Activated CD8-positive, alpha-beta T cell treated with anti-CD3 and anti-CD28 coated beads, Interleukin-2, amount 10 ng/mL, durations not matched to agents 7 days and 5 days (primary cell): ENCODE measurements at regions of chr1 and their contacts with region 1.

Region 1: DNA sequence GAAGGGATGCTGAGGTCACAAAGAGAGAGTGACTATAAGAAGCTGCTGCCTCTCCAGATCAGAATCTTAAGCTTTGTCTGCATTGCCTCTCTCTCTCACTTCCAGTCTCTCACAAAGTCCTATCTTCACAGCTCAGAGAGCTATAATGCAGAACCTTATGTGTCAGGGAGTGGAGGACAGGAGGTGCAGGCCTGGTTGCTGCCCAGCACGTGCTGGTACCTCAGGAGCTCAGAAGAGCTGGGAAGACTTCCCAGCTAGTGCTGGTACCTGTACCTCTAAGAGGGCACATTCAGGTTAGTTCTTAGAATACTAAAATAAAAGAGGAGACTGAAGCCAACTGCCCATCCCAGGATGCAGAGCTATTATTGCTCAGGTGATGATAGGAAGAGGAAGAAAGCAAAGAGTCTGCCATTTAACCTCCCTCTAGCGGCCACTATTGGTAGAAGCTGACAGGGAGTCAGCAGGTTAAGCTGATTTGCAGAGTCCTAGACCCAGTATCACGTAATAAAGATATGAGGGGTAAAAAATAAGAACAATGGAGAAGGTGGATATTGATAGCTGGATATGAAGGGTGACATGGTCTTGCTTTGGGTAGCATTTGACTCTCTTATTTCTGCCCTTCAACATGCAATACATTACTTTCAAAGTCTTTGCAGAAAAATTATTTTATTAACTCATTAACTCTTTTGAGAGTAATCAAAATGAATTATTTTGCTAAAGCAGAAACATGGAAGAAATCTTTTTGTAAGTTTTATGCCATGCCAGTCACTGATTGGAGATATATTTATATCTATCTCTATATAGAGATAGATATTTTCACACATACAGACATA is 138.1 kb upstream of the HMCN1 start:
- DNase-seq: peak; percentile 60
- ATAC-seq: peak; percentile 76
- H3K4me3 Mint-ChIP-seq: no peak overlapping the region
- H3K27ac Mint-ChIP-seq: no peak overlapping the region
- H3K4me1 Mint-ChIP-seq: peaks cover 27% of the 10 kb centered on the region
- H3K27me3 Mint-ChIP-seq: no peaks in the 10 kb centered on the region

Region 2: GRCh38 chr1:185404291-185404690 is 191.8 kb before region 1 on chr1:
- CTCF ChIA-PET with region 1: no interaction called
- POLR2A ChIA-PET with region 1: no interaction called
- DNase-seq: no peak
- ATAC-seq: no peak
- H3K4me3 Mint-ChIP-seq: peak overlapping the region; percentile 34
- H3K27ac Mint-ChIP-seq: peak overlapping the region; percentile 63
- H3K4me1 Mint-ChIP-seq: peaks cover 44% of the 10 kb centered on the region
- H3K27me3 Mint-ChIP-seq: no peaks in the 10 kb centered on the region

Region 3: GRCh38 chr1:185566995-185567394 is 29.1 kb before region 1 on chr1:
- CTCF ChIA-PET with region 1: interaction called, 33 read pairs
- POLR2A ChIA-PET with region 1: no interaction called
- DNase-seq: peak; percentile 79
- ATAC-seq: peak; percentile 84
- H3K4me3 Mint-ChIP-seq: peak overlapping the region; percentile 29
- H3K27ac Mint-ChIP-seq: peak overlapping the region; percentile 76
- H3K4me1 Mint-ChIP-seq: peaks cover 70% of the 10 kb centered on the region
- H3K27me3 Mint-ChIP-seq: no peaks in the 10 kb centered on the region

Region 4: GRCh38 chr1:185573677-185574076 is 22.4 kb before region 1 on chr1:
- CTCF ChIA-PET with region 1: interaction called, 15 read pairs
- POLR2A ChIA-PET with region 1: no interaction called
- DNase-seq: no peak
- ATAC-seq: no peak
- H3K4me3 Mint-ChIP-seq: no peak overlapping the region
- H3K27ac Mint-ChIP-seq: no peak overlapping the region
- H3K4me1 Mint-ChIP-seq: peaks cover 22% of the 10 kb centered on the region
- H3K27me3 Mint-ChIP-seq: no peaks in the 10 kb centered on the region

Region 5: GRCh38 chr1:185585770-185586169 is 10.3 kb before region 1 on chr1:
- CTCF ChIA-PET with region 1: interaction called, 20 read pairs
- POLR2A ChIA-PET with region 1: no interaction called
- DNase-seq: no peak
- ATAC-seq: no peak
- H3K4me3 Mint-ChIP-seq: no peak overlapping the region
- H3K27ac Mint-ChIP-seq: no peak overlapping the region
- H3K4me1 Mint-ChIP-seq: no peaks in the 10 kb centered on the region
- H3K27me3 Mint-ChIP-seq: no peaks in the 10 kb centered on the region

Region 6: DNA sequence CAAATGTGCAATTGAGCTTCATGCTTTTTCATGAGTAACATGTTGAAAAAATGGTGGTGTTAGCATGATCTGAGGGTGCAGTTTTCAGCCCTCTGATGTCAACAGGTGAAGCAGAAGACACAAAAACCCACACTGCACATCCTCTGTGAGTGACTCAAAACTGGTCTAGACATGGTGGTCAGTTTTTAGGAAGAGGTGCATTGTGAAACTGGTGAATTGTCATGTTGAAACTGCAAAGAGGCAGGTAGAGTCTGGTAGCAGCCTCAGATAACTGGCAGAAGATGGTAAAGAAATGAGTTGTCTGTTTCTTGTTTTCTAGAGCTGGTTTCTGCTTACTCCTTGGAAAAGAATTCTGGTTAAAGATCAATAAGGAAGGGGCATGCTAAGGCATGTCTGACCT is 40.8 kb after region 1 on chr1:
- CTCF ChIA-PET with region 1: interaction called, 20 read pairs
- POLR2A ChIA-PET with region 1: interaction called, 6 read pairs
- DNase-seq: peak; percentile 75
- ATAC-seq: peak; percentile 92
- H3K4me3 Mint-ChIP-seq: peak overlapping the region; percentile 12
- H3K27ac Mint-ChIP-seq: peak overlapping the region; percentile 80
- H3K4me1 Mint-ChIP-seq: peaks cover 31% of the 10 kb centered on the region
- H3K27me3 Mint-ChIP-seq: no peaks in the 10 kb centered on the region

Region 7: DNA sequence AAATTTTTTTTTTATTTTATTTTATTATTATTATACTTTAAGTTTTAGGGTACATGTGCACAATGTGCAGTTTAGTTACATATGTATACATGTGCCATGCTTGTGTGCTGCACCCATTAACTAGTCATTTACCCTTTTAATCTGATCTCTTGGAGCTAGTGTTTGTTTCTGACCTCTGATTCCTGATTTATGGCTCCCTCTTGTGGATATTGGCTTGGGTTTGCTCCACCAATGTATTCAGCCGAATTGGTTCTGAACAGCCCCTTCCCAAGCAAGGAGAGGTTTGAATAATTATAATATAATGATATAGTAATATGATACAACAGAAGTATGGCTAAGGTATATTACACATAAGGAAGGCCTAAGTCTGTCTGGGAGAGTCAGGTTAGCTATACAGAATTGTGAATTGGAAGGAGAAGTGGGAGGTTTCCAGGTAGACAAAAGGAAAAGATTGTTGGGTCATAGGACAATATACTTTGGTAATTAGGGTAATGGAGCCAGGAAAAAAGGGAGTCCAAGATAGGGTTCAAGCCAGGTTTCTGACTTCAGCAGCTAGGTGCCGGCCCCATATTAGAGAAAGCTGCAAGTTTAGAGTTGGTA is 85.1 kb after region 1 on chr1:
- CTCF ChIA-PET with region 1: interaction called, 13 read pairs
- POLR2A ChIA-PET with region 1: no interaction called
- DNase-seq: peak; percentile 54
- ATAC-seq: peak; percentile 67
- H3K4me3 Mint-ChIP-seq: no peak overlapping the region
- H3K27ac Mint-ChIP-seq: no peak overlapping the region
- H3K4me1 Mint-ChIP-seq: peaks cover 28% of the 10 kb centered on the region
- H3K27me3 Mint-ChIP-seq: peaks cover 6% of the 10 kb centered on the region